ENCODE measurements at regions of chr15 and their contacts with region 1.

Region 1: GRCh38 chr15:50686468-50687301 is at the start of gene TRPM7:
- ATAC-seq: peak; percentile 85 to 93 (median 90)
- H3K4me3 ChIP-seq: peak within 1 kb of the TSS; percentile 58 to 84 (median 71)
- H3K27ac ChIP-seq: peak within 1 kb of the TSS; percentile 63 to 93
- H3K4me1 ChIP-seq: peaks cover 11 to 14% of the 10 kb centered on the region in 2 donors
- total RNA-seq, gene TRPM7: 12.2 to 63.8 (median 24.2) TPM

Region 2: GRCh38 chr15:49627407-49627877 is 1059.2 kb before region 1 on chr15:
- in situ Hi-C with region 1: no loop called
- ATAC-seq: peak in 3 of 8 experiments; percentile 89 to 97 (median 95)
- H3K4me3 ChIP-seq: no peak overlapping the region
- H3K27ac ChIP-seq: no peak overlapping the region
- H3K4me1 ChIP-seq: no peaks in the 10 kb centered on the region

Region 3: DNA sequence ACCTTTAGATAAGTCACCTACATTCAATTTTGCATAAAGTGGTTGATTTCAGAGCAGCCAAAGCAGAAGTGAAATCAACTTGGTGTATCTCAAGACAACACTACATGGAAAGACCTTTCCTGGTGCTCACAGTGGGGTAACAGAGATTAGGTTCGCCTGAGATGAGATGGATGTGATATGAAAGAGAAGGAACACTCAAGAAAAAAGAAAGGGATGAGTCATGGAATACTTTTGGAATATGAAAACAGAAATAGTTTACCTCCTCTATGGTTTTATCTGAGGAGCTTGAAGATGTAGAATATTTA is 168.4 kb after region 1 on chr15:
- in situ Hi-C with region 1: loop called in 1 of 9 experiments (anchors 25 kb)
- ATAC-seq: no peak
- H3K4me3 ChIP-seq: no peak overlapping the region
- H3K27ac ChIP-seq: no peak overlapping the region
- H3K4me1 ChIP-seq: no peaks in the 10 kb centered on the region

Region 4: GRCh38 chr15:50876989-50877360 is 190.3 kb after region 1 on chr15:
- in situ Hi-C with region 1: loop called in 2 of 9 experiments (anchors 25 kb)
- ATAC-seq: peak; percentile 38 to 84 (median 64)
- H3K4me3 ChIP-seq: peak overlapping the region in 1 of 5 donors; percentile 23
- H3K27ac ChIP-seq: no peak overlapping the region
- H3K4me1 ChIP-seq: peaks cover 0 to 5% of the 10 kb centered on the region in 2 donors

Region 5: DNA sequence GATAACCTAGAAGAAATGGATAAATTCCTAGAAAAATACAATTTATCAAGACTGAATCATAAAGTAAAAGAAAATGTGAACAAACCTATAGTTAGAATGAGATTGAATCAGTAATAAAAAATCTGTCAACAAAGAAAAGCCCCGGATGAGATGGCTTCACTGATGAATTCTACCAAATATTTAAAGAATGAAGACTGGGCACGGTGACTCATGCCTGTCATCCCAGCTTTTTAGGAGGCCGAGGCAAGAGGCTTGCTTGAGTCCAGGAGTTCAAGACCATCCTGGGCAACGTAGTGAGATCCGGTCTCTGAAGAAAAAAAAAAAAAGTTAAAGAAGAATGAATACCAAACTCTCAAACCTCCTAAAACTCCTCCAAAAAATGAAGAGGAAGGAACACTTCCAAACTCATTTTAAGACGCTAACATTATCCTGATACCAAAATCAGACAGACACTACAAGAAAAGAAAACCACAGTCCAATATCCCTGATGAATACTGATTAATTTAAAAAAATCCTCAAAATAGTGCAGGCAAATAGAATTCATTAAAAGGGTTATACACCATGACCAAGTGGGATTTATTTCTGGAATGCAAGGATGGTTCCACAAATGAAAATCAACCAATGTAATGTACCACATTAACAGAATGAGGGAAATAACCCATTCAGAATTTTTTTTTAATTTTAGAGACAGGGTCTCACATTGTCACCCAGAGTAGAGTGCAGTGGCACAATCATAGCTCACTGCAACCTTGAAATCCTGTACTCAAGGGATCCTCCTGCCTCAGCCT is 204.3 kb after region 1 on chr15:
- in situ Hi-C with region 1: loop called in 2 of 9 experiments (anchors 10 to 25 kb)
- ATAC-seq: no peak
- H3K4me3 ChIP-seq: no peak overlapping the region
- H3K27ac ChIP-seq: no peak overlapping the region
- H3K4me1 ChIP-seq: no peaks in the 10 kb centered on the region

Region 6: DNA sequence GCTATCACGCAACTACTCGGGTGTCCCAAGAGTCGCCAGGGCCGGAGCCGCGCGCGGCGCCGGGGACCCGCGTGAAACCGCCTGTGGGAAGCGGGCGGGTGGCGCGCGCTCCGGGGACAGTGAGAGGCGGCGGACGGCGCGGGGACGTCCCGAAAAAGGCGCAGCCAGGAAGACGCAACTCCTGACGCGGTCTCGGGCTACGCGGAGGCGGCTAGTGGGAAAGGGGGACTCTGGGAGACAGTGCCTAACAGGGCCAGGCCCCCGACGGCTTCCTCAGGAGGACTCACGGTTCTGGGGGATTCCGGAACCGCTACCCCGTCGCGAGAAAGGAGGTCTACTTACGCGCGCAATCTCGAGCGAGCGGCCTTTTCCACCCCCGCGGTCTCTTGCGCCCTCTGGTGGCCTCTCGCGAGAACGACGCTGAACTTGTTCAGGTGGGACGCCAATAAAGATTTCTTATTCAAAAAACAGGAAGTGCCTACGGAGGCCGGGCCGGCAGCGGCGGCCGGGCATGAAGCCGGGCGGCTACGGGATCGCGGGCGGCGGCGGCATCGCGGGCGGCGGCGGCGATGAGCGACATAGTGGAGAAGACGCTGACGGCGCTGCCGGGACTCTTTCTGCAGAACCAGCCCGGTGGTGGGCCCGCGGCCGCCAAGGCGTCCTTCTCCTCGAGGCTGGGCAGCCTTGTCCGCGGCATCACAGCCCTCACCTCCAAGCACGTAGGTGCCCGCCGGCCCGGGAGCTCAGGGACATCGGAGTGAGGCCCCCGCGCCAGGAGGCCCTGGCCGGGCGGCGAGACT is 221.7 kb after region 1 on chr15 and contains the start of gene AP4E1:
- in situ Hi-C with region 1: loop called in 1 of 9 experiments (anchors 25 kb)
- ATAC-seq: peak; percentile 64 to 89 (median 84)
- H3K4me3 ChIP-seq: peak within 1 kb of the TSS; percentile 70 to 96 (median 91)
- H3K27ac ChIP-seq: peak within 1 kb of the TSS; percentile 51 to 77
- H3K4me1 ChIP-seq: peaks cover 2 to 6% of the 10 kb centered on the region in 2 donors
- total RNA-seq, gene AP4E1: 4.2 to 16.0 (median 8.9) TPM